Naive thymus-derived CD4-positive, alpha-beta T cell (primary cell): ENCODE measurements at regions of chr6 and their contacts with region 1.

Region 1: GRCh38 chr6:3031857-3032640 is 32.4 kb downstream of the NQO2 start:
- DNase-seq: peak in 4 of 9 donors; percentile 18 to 43 (median 36)
- ATAC-seq: peak; percentile 61
- H3K4me3 ChIP-seq: no peak overlapping the region
- H3K4me3 Mint-ChIP-seq: no peak overlapping the region
- H3K27ac ChIP-seq: no peak overlapping the region
- H3K27ac Mint-ChIP-seq: no peak overlapping the region
- H3K4me1 ChIP-seq: peaks cover 5% of the 10 kb centered on the region in 2 donors
- H3K4me1 Mint-ChIP-seq: peaks cover 3 to 25% (median 14%) of the 10 kb centered on the region in 7 donors
- H3K27me3 ChIP-seq: no peaks in the 10 kb centered on the region
- H3K27me3 Mint-ChIP-seq: peaks cover 0 to 47% (median 0%) of the 10 kb centered on the region in 5 donors

Region 2: DNA sequence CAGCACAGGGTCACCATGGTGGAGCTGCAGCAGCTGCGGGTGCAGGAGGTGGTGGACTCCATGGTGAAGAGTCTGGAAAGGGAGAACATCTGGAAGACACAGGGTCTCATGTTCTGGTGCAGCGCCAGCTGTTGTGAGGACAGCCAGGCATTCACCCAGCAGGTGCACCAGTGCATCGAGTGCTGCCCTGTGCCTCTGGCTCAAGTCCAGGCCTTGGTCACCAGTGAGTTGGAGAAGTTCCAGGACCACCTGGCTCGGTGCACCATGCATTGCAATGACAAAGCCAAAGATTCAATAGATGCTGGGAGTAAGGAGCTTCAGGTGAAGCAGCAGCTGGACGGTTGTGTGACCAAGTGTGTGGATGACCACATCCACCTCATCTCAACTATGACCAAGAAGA is 13.3 kb after region 1 on chr6:
- CTCF ChIA-PET with region 1: interaction called, 5 read pairs
- POLR2A ChIA-PET with region 1: interaction called, 12 read pairs
- intact Hi-C with region 1: no loop called
- DNase-seq: no peak
- ATAC-seq: no peak
- H3K4me3 ChIP-seq: no peak overlapping the region
- H3K4me3 Mint-ChIP-seq: no peak overlapping the region
- H3K27ac ChIP-seq: no peak overlapping the region
- H3K27ac Mint-ChIP-seq: no peak overlapping the region
- H3K4me1 ChIP-seq: no peaks in the 10 kb centered on the region
- H3K4me1 Mint-ChIP-seq: peaks cover 0 to 2% (median 0%) of the 10 kb centered on the region in 7 donors
- H3K27me3 ChIP-seq: no peaks in the 10 kb centered on the region
- H3K27me3 Mint-ChIP-seq: peaks cover 0 to 42% (median 0%) of the 10 kb centered on the region in 5 donors